ENCODE measurements at regions of chr13 and their contacts with region 1.

Region 1: GRCh38 chr13:43786773-43787517 is at the start of gene ENOX1:
- DNase-seq: peak; percentile 84
- H3K4me3 ChIP-seq: peak within 1 kb of the TSS; percentile 74
- H3K27ac ChIP-seq: no peak within 1 kb of the TSS
- H3K4me1 ChIP-seq: no peaks in the 10 kb centered on the region
- H3K27me3 ChIP-seq: no peaks in the 10 kb centered on the region
- total RNA-seq, gene ENOX1: 1.8 and 2.7 TPM in 2 replicates

Region 2: DNA sequence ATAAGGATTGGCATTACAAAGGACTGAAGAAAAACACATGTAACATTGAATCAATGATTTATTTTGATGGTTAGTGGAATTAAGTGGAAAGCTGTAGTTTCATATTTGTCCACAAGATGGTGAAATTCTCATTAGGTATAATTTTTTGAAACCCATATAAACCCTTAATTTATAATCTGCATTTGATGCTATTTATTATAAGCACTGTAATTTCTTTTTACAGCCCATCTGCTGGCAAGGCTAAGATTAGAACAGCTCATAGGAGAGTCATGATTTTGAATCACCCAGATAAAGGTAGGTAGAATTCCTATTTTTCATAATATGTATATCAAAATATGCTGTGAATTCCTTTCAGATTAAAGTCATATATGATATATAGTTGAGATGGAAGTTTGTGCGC is 701.4 kb before region 1 on chr13:
- in situ Hi-C with region 1: loop called (anchors 25 kb)
- DNase-seq: peak; percentile 54
- H3K4me3 ChIP-seq: no peak overlapping the region
- H3K27ac ChIP-seq: no peak overlapping the region
- H3K4me1 ChIP-seq: no peaks in the 10 kb centered on the region
- H3K27me3 ChIP-seq: no peaks in the 10 kb centered on the region

Region 3: GRCh38 chr13:43303033-43303729 is 483.8 kb before region 1 on chr13:
- in situ Hi-C with region 1: loop called (anchors 25 kb)
- DNase-seq: peak; percentile 72
- H3K4me3 ChIP-seq: no peak overlapping the region
- H3K27ac ChIP-seq: no peak overlapping the region
- H3K4me1 ChIP-seq: peaks cover 38% of the 10 kb centered on the region
- H3K27me3 ChIP-seq: no peaks in the 10 kb centered on the region; the same call in 1 of the 2 replicates